ENCODE measurements at regions of chr5 and their contacts with region 1.

Region 1: GRCh38 chr5:112848116-112848811 is 12.8 kb upstream of the SRP19 start:
- DNase-seq: peak; percentile 64
- ATAC-seq: peak; percentile 98
- H3K4me3 ChIP-seq: peak overlapping the region in 1 of 2 experiments; percentile 25; a peak in 1 of 4 replicates
- H3K27ac ChIP-seq: peak overlapping the region; percentile 55; the same call in 1 of the 2 replicates
- H3K4me1 ChIP-seq: no peaks in the 10 kb centered on the region
- H3K27me3 ChIP-seq: no peaks in the 10 kb centered on the region
- CTCF ChIP-seq: peak; percentile 81

Region 2: DNA sequence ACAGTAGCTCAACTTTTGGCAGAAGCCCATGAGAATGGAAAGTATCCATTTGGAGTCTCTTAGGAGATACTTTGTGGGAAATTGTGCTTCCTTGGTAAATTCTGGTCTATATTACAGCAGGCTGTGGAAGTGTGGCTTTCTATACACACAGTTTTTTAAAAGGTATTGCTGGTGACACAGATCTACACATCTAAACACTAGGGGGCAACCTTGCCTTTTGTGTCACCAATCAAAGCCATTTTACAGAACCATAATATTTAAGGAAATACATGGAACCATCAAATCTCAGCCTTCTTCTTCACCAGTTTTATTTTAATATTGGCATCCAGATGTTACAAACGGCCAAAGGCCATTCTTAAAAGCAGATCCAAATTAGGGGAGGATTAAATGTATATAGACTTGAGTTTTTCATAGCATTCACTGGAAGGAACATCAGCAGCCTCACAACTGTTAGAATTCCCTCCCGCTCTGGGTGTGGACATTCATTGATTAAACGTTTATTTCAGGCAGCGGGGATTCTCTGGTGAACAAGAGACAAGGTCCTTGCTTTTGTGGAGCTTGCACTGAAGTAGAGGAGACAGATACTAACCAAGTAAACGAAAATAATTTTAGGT is 296.7 kb before region 1 on chr5:
- CTCF ChIA-PET with region 1: no interaction called
- POLR2A ChIA-PET with region 1: no interaction called
- in situ Hi-C with region 1: no loop called
- intact Hi-C with region 1: loop called (anchors 5 kb)
- DNase-seq: peak; percentile 39
- ATAC-seq: peak; percentile 79
- H3K4me3 ChIP-seq: no peak overlapping the region
- H3K27ac ChIP-seq: no peak overlapping the region
- H3K4me1 ChIP-seq: no peaks in the 10 kb centered on the region
- H3K27me3 ChIP-seq: no peaks in the 10 kb centered on the region
- CTCF ChIP-seq: peak; percentile 76

Region 3: GRCh38 chr5:112691758-112692157 is 156.5 kb before region 1 on chr5:
- CTCF ChIA-PET with region 1: interaction called, 9 read pairs
- POLR2A ChIA-PET with region 1: no interaction called
- in situ Hi-C with region 1: no loop called
- intact Hi-C with region 1: loop called (anchors 5 kb)
- DNase-seq: peak; percentile 20
- ATAC-seq: peak; percentile 79
- H3K4me3 ChIP-seq: no peak overlapping the region
- H3K27ac ChIP-seq: no peak overlapping the region
- H3K4me1 ChIP-seq: no peaks in the 10 kb centered on the region
- H3K27me3 ChIP-seq: peaks cover 5% of the 10 kb centered on the region
- CTCF ChIP-seq: peak; percentile 67

Region 4: DNA sequence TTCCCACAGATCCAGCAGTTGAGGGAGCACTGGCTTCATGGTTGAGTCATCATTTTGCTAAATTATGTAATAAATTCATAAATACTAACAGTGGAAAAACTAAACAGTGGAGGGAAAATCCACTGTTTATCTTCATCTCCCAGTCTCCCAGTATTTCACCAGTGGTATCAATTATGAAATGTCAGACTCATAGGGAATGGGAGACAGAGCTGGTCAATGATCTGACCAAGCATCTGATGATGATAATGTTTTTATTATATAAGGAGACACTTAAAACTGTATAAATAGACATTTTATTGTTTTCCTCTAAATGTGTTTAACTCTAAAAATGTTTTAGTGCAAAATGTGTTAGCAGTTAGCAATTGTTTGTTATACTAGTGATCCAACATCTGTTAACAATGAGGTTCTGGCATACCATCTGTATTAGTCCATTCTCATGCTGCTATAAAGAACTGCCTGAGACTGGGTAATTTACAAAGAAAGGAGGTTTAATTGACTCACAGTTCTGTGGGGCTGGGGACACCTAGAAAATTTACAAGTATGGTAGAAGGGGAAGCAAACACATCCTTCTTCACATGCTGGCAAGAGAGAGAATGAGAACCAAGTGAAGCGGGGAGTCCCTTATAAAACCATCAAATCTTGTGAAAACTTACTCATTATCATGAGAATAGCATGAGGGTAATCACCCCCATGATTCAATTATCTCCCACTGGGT is 85.5 kb after region 1 on chr5:
- CTCF ChIA-PET with region 1: no interaction called
- POLR2A ChIA-PET with region 1: no interaction called
- in situ Hi-C with region 1: no loop called
- intact Hi-C with region 1: no loop called
- DNase-seq: no peak
- ATAC-seq: no peak
- H3K4me3 ChIP-seq: no peak overlapping the region
- H3K27ac ChIP-seq: no peak overlapping the region
- H3K4me1 ChIP-seq: no peaks in the 10 kb centered on the region
- H3K27me3 ChIP-seq: no peaks in the 10 kb centered on the region
- CTCF ChIP-seq: no peak

Measured in Panc1 (cell line).